Breast epithelium (tissue), 4 donors: ENCODE measurements at regions of chr1 and their contacts with region 1.

Region 1: GRCh38 chr1:212256369-212256768 is 28.8 kb upstream of the PPP2R5A start:
- DNase-seq: no peak
- H3K4me3 ChIP-seq: no peak overlapping the region
- H3K27ac ChIP-seq: no peak overlapping the region
- H3K4me1 ChIP-seq: no peaks in the 10 kb centered on the region
- H3K27me3 ChIP-seq: no peaks in the 10 kb centered on the region
- CTCF ChIP-seq: no peak
- POLR2A ChIP-seq: no peak

Region 2: DNA sequence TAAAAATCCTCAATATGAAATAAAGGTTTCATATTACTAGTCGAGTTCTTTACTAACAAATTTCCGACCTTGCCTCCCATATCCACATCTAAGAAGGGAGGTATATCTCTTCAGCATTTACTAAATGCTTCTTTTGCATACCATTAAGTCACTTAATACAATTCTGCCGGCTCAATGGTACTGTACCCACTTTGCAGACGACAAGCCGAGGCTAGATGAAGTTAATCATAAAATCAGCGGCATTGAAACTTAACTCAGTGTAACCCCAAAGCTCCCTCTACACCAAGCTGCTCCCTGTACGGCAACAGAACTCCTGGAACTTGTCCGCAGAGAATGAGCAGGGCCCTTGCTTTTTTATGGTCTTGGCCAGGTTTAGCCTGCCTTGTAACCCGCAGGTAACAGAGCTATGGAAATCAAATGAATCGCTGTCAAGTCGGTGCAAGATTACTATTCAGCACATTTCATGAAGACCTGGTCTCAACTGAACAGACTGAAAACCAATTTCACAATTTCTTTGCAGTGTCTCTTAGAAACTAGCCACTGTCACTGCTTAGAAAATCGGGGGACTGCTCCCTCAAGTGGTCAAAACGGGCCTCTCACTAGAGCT is 221.8 kb before region 1 on chr1:
- intact Hi-C with region 1: no loop called
- DNase-seq: no peak
- H3K4me3 ChIP-seq: peak overlapping the region; percentile 54 to 82 (median 59)
- H3K27ac ChIP-seq: peak overlapping the region; percentile 60 to 95
- H3K4me1 ChIP-seq: peaks cover 0 to 5% of the 10 kb centered on the region in 2 donors
- H3K27me3 ChIP-seq: no peaks in the 10 kb centered on the region
- CTCF ChIP-seq: no peak
- POLR2A ChIP-seq: no peak

Region 3: GRCh38 chr1:214102907-214103306 is 1846.5 kb after region 1 on chr1:
- intact Hi-C with region 1: loop called (anchors 10 kb)
- DNase-seq: no peak
- H3K4me3 ChIP-seq: no peak overlapping the region
- H3K27ac ChIP-seq: no peak overlapping the region
- H3K4me1 ChIP-seq: no peaks in the 10 kb centered on the region
- H3K27me3 ChIP-seq: no peaks in the 10 kb centered on the region
- CTCF ChIP-seq: no peak
- POLR2A ChIP-seq: no peak